ENCODE measurements at regions of chr10 and their contacts with region 1.

Region 1: GRCh38 chr10:92530421-92530820 is 43.5 kb downstream of the IDE start:
- DNase-seq: no peak
- H3K4me3 ChIP-seq: no peak overlapping the region
- H3K27ac ChIP-seq: no peak overlapping the region
- H3K4me1 ChIP-seq: no peaks in the 10 kb centered on the region
- H3K27me3 ChIP-seq: no peaks in the 10 kb centered on the region
- CTCF ChIP-seq: no peak

Region 2: DNA sequence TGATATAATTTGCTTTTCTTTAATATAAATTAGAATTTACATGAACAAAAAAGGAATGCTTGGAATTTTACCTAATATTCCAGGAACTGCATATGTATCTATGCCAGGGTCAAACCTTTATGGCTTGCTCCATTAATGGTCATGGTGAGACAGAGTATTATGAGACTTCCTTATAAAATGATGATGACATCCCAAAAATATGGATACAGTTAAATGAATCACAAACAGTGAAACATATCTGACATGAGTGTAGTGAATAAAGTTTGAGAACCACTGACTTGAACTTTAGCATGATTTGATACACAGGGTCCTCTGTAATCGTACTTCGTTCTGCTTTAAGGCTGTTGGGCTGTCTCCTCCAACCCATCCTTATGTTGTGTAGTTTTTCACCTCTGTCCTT is 187.6 kb before region 1 on chr10:
- CTCF ChIA-PET with region 1: no interaction called
- POLR2A ChIA-PET with region 1: no interaction called
- intact Hi-C with region 1: no loop called
- DNase-seq: no peak
- H3K4me3 ChIP-seq: no peak overlapping the region
- H3K27ac ChIP-seq: 0 out of 2 replicates have a peak overlapping the region, but pooled peaks have one; percentile 19
- H3K4me1 ChIP-seq: no peaks in the 10 kb centered on the region
- H3K27me3 ChIP-seq: no peaks in the 10 kb centered on the region
- CTCF ChIP-seq: no peak

Region 3: DNA sequence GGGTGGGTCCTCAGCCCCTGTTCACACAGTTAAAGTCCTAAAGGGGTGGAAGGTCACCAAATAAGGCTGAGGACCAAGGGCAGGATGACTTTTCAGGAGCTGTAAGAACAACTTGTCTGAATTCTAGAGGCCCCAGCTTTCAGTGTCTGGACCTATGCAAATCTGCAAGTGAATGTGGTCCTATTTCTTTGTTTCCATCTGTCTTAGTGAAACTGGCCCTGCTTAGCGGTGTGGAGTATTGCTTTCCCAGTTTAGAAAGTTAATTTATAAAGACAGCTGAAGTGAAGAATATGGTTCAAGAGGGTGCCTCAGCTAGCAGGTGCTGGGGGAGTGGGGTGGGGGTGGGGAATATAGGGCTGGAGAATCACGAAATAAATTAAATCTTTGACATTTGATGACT is 199.5 kb after region 1 on chr10:
- CTCF ChIA-PET with region 1: no interaction called
- POLR2A ChIA-PET with region 1: interaction called, 27 read pairs
- intact Hi-C with region 1: no loop called
- DNase-seq: no peak
- H3K4me3 ChIP-seq: no peak overlapping the region
- H3K27ac ChIP-seq: no peak overlapping the region
- H3K4me1 ChIP-seq: no peaks in the 10 kb centered on the region
- H3K27me3 ChIP-seq: no peaks in the 10 kb centered on the region
- CTCF ChIP-seq: no peak